Sigmoid colon (tissue), 7 donors: ENCODE measurements at regions of chr18 and their contacts with region 1.

Region 1: GRCh38 chr18:35972197-35973052 is at the start of gene RMP24:
- DNase-seq: peak; percentile 98
- H3K4me3 ChIP-seq: peak within 1 kb of the TSS; percentile 72 to 92 (median 88)
- H3K27ac ChIP-seq: peak within 1 kb of the TSS; percentile 91 to 93 (median 92)
- H3K4me1 ChIP-seq: peaks cover 0 to 26% (median 23%) of the 10 kb centered on the region in 4 donors
- H3K27me3 ChIP-seq: no peaks in the 10 kb centered on the region
- CTCF ChIP-seq: no peak
- EP300 ChIP-seq: peak in 1 of 4 donors; percentile 65
- POLR2A ChIP-seq: peak in 1 of 2 donors; percentile 50

Region 2: GRCh38 chr18:35267161-35267651 is 705.2 kb before region 1 on chr18:
- intact Hi-C with region 1: loop called (anchors 10 kb)
- DNase-seq: peak; percentile 93
- H3K4me3 ChIP-seq: peak overlapping the region; percentile 66 to 75 (median 72)
- H3K27ac ChIP-seq: peak overlapping the region; percentile 85 to 89 (median 87)
- H3K4me1 ChIP-seq: peaks cover 0 to 6% (median 5%) of the 10 kb centered on the region in 4 donors
- H3K27me3 ChIP-seq: no peaks in the 10 kb centered on the region
- CTCF ChIP-seq: no peak
- EP300 ChIP-seq: peak in 1 of 4 donors; percentile 6
- POLR2A ChIP-seq: peak; percentile 8 to 16

Region 3: DNA sequence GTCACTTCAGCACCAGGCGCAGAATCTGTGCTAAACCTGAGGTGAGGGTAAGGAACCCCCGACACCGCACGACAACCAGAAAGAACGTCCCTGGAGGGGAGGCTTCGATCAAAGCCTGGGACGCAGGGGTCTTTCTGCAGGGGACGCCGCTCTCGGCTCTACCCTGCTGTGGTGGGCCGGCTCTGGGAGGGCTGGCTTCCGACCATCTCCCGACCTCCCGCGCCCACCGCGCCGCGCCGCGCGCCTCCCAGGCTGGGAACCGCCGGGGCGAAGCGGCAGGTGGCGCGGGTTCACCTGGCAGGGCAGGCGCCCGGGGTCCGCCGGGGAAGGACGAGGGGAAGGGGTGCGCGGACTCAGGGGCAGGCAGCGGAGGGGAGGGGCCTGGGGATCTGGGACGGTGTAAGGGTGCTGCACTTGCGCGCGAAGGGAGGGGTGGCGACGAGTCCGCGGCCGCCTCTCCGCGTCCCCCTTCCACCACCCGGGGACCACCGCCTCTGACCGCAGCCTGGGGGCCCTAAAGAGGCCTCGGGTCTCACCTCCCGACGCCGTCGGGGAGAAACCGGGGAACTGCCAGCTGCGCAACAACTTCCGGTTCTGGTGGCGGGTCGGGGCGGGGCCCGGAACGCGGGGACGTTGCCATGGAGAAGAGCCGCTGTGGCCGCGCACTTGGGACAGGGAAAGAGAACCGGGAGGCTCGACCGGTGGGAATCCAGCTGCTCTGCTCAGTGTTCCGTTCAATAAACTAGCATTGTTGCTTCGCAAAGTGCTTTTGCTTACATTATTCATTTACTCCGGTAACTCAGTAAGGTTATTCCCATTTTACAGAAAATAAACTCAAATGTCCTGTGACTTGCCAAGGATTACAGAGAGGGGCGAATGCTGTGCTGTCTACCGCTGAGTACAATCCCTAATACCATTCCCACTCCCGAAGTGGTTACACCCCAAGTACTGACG is 595.4 kb before region 1 on chr18 and contains the start of gene ZNF396:
- intact Hi-C with region 1: loop called (anchors 5 kb)
- DNase-seq: peak; percentile 92
- H3K4me3 ChIP-seq: peak within 1 kb of the TSS; percentile 60 to 91 (median 83)
- H3K27ac ChIP-seq: peak within 1 kb of the TSS in 3 of 4 donors; percentile 56 to 68 (median 62)
- H3K4me1 ChIP-seq: peaks cover 0 to 11% (median 5%) of the 10 kb centered on the region in 4 donors
- H3K27me3 ChIP-seq: no peaks in the 10 kb centered on the region
- CTCF ChIP-seq: no peak
- EP300 ChIP-seq: no peak
- POLR2A ChIP-seq: no peak
- total RNA-seq, gene ZNF396: 1.9 to 3.3 (median 2.2) TPM

Region 4: DNA sequence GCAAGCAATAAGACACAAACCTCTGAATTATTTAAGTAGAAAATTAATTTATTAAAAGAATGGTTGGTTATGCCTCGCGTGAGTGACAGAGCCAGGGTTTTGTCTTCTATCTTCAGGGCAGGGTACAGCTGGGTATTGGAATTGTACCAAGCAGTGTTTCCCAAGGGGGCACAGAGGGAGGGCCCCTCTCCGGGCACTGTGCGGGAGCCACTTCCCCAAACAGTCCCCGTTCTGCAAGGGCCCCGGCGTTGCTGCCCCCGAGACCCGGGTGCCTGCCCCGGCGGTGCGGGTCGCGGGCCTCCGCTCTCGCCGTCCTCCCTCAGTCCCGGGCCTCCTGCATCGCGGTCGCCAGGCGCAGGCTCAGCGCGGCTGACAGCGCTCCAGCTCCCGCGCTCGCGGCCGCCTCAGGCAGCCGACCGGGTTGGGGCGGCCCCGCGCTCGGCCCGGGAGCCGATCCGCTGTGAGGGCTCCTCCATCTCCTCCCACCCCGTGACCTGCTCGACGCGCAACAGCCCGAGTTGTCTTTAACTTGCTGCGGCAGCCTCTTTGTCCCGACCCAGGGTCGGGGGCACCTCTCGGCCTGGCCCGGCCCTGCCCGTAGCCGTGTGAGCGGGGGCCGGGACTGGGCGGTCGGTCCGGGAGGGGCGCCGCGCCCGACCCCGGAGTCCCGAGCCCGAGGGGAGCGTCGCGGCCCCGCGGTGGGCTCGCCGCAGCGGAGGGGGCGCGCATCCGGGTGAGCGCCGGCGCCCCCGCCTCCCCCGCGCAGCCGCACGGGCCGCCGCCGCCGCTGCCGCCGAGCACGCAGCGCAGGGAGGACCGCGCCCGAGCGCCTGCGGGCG is 391.5 kb before region 1 on chr18:
- intact Hi-C with region 1: loop called (anchors 5 kb)
- DNase-seq: peak; percentile 81
- H3K4me3 ChIP-seq: peak overlapping the region; percentile 58 to 88 (median 72)
- H3K27ac ChIP-seq: peak overlapping the region; percentile 91 to 99 (median 96)
- H3K4me1 ChIP-seq: peaks cover 0 to 31% (median 17%) of the 10 kb centered on the region in 4 donors
- H3K27me3 ChIP-seq: no peaks in the 10 kb centered on the region
- CTCF ChIP-seq: no peak
- EP300 ChIP-seq: no peak
- POLR2A ChIP-seq: no peak

Region 5: GRCh38 chr18:36129300-36130038 is 157.0 kb after region 1 on chr18 and contains the starts of genes ELP2 and SLC39A6:
- intact Hi-C with region 1: loop called (anchors 5 kb)
- DNase-seq: peak; percentile 98
- H3K4me3 ChIP-seq: peak within 1 kb of the TSS; percentile 68 to 89 (median 74)
- H3K27ac ChIP-seq: peak within 1 kb of the TSS; percentile 96 to 99 (median 98)
- H3K4me1 ChIP-seq: peaks cover 6 to 40% (median 30%) of the 10 kb centered on the region in 4 donors
- H3K27me3 ChIP-seq: no peaks in the 10 kb centered on the region
- CTCF ChIP-seq: no peak
- EP300 ChIP-seq: peak in 1 of 4 donors; percentile 52
- POLR2A ChIP-seq: peak; percentile 32 to 34
- total RNA-seq, gene ELP2: 51.7 to 77.2 (median 67.2) TPM
- total RNA-seq, gene SLC39A6: 28.1 to 34.6 (median 31.8) TPM